ENCODE measurements at regions of chr3 and their contacts with region 1.

Region 1: GRCh38 chr3:40971191-40972168 is 227.8 kb upstream of the CTNNB1 start:
- DNase-seq: peak; percentile 24
- H3K4me3 Mint-ChIP-seq: peak overlapping the region; percentile 62
- H3K27ac Mint-ChIP-seq: peak overlapping the region; percentile 97
- H3K4me1 Mint-ChIP-seq: peaks cover 64% of the 10 kb centered on the region
- H3K27me3 Mint-ChIP-seq: peaks cover 2% of the 10 kb centered on the region

Region 2: DNA sequence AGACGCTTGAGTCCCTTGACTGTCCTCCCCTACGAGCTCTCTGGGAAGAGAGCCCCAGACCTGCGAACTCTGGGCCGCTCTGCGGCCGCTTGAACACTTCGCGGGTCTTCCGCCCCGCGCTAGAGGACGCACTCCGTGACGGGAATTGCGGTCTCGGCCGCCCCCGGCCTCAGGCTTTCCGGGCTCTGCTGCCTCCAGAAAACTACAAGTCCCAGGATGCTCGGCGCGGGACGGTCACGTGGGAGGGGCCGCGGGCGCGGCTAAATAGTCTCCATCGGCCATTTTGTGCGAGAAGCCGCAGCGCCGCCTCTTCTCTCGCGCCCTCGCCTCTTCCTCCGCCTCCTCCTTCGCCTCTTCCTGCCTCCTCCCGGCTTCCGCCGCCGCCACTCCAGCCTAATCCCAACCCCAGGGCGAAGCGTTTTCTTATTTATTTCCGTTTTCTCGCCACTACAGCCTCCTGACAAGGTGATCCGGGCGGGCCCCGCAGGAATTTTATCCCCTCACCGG is 662.0 kb before region 1 on chr3 and contains the start of gene EIF1B:
- intact Hi-C with region 1: loop called (anchors 2 kb)
- DNase-seq: peak; percentile 98
- H3K4me3 Mint-ChIP-seq: peak within 1 kb of the TSS; percentile 96
- H3K27ac Mint-ChIP-seq: peak within 1 kb of the TSS; percentile 95
- H3K4me1 Mint-ChIP-seq: peaks cover 28% of the 10 kb centered on the region
- H3K27me3 Mint-ChIP-seq: no peaks in the 10 kb centered on the region
- total RNA-seq, gene EIF1B: 49.1 and 49.6 TPM in 2 replicates

Region 3: GRCh38 chr3:40961104-40961857 is 10.2 kb before region 1 on chr3:
- intact Hi-C with region 1: loop called (anchors 1 kb)
- DNase-seq: no peak
- H3K4me3 Mint-ChIP-seq: no peak overlapping the region
- H3K27ac Mint-ChIP-seq: no peak overlapping the region
- H3K4me1 Mint-ChIP-seq: no peaks in the 10 kb centered on the region
- H3K27me3 Mint-ChIP-seq: peaks cover 3% of the 10 kb centered on the region

Region 4: DNA sequence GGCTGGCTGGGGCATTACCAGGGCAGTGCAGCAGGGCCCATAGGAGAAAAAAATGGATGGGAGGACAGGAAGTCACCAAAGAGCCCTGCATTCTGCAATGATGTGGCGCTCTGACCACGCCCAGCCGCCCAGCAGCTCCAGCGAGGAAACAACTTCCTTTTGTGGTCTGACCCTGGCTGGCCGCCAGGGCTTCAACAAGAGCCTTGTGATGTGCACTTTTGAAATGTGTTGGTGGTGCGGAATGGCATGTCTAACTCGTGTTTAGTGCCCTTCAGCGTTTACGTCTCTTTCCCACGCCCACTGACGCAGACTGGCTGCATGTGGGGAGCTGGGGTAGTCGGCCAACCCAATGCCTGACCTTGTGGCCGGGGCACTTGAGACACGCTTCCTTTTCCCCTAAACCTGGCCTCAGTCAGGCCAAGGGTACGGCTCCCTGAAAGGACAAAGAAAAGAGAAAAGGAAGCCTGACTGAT is 146.0 kb after region 1 on chr3:
- intact Hi-C with region 1: loop called (anchors 2 kb)
- DNase-seq: peak; percentile 70
- H3K4me3 Mint-ChIP-seq: no peak overlapping the region
- H3K27ac Mint-ChIP-seq: peak overlapping the region; percentile 67
- H3K4me1 Mint-ChIP-seq: peaks cover 24% of the 10 kb centered on the region
- H3K27me3 Mint-ChIP-seq: no peaks in the 10 kb centered on the region

Region 5: DNA sequence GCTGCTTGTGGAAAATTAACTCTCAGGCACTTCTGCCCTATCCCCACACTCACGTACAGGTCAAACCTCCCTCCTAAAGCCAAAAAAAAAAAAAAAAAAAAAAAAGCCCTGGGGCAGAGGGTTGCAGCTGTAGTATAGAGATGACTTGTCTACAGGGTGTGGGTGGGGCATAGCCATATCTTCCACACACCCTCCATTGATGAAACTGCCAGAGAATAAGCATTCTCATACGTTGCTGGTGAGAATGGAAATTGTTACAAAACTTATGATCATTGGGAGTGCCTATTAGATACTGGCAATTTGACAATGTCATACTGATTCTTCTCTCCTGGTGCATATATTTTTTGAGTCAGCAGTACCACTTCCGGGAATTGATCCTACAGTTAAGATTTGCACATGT is 216.8 kb after region 1 on chr3:
- intact Hi-C with region 1: loop called (anchors 1 kb)
- DNase-seq: no peak
- H3K4me3 Mint-ChIP-seq: no peak overlapping the region
- H3K27ac Mint-ChIP-seq: peak overlapping the region; percentile 51
- H3K4me1 Mint-ChIP-seq: peaks cover 35% of the 10 kb centered on the region
- H3K27me3 Mint-ChIP-seq: peaks cover 12% of the 10 kb centered on the region

Region 6: GRCh38 chr3:41394896-41395295 is 423.4 kb after region 1 on chr3:
- intact Hi-C with region 1: no loop called
- DNase-seq: no peak
- H3K4me3 Mint-ChIP-seq: no peak overlapping the region
- H3K27ac Mint-ChIP-seq: no peak overlapping the region
- H3K4me1 Mint-ChIP-seq: no peaks in the 10 kb centered on the region
- H3K27me3 Mint-ChIP-seq: peaks cover 2% of the 10 kb centered on the region

Region 7: GRCh38 chr3:41418961-41419691 is 447.6 kb after region 1 on chr3:
- intact Hi-C with region 1: loop called (anchors 5 kb)
- DNase-seq: peak; percentile 39
- H3K4me3 Mint-ChIP-seq: peak overlapping the region; percentile 20
- H3K27ac Mint-ChIP-seq: peak overlapping the region; percentile 53
- H3K4me1 Mint-ChIP-seq: peaks cover 29% of the 10 kb centered on the region
- H3K27me3 Mint-ChIP-seq: peaks cover 4% of the 10 kb centered on the region

Region 8: GRCh38 chr3:42090973-42091731 is 1119.7 kb after region 1 on chr3 and contains the start of gene TRAK1:
- intact Hi-C with region 1: loop called (anchors 5 kb)
- DNase-seq: no peak
- H3K4me3 Mint-ChIP-seq: peak within 1 kb of the TSS; percentile 11
- H3K27ac Mint-ChIP-seq: peak within 1 kb of the TSS; percentile 64
- H3K4me1 Mint-ChIP-seq: peaks cover 53% of the 10 kb centered on the region
- H3K27me3 Mint-ChIP-seq: no peaks in the 10 kb centered on the region
- total RNA-seq, gene TRAK1: 32.6 and 33.8 TPM in 2 replicates

Measured in activated T-helper 1 cell treated with anti-CD3 and anti-CD28 coated beads, Interleukin-12 subunit alpha, Interleukin-12 subunit beta, Interleukin-2, Interleukin-4 antibody, amounts not matched to agents 30 ng/mL and 10 ng/mL and 1 ng/mL, durations not matched to agents 14 hours and 24 hours and 36 hours (primary cell).